KBM-7 (cell line): ENCODE measurements at regions of chr11 and their contacts with region 1.

Region 1: GRCh38 chr11:107590460-107591377 is at the start of gene ELMOD1:
- DNase-seq: peak; percentile 41

Region 2: DNA sequence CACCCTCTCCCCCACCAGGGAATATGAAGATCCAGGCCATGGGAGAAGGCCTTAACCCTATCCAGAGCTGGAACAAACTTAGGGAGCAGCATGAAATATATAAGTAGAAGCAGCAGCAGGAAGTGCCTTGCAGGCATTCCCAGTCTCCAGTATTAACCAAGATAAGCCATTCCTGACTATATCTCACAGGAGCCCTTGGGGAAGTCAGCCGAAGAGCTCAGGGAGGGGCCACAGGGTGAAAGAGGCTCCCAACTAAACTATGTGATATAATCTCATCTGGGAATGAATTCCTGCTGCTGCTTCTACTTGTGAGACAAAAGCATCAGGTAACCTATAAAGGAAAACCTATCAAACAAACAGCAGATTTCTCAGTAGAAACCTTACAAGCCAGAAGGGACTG is 536.3 kb before region 1 on chr11:
- in situ Hi-C with region 1: no loop called
- DNase-seq: no peak

Region 3: DNA sequence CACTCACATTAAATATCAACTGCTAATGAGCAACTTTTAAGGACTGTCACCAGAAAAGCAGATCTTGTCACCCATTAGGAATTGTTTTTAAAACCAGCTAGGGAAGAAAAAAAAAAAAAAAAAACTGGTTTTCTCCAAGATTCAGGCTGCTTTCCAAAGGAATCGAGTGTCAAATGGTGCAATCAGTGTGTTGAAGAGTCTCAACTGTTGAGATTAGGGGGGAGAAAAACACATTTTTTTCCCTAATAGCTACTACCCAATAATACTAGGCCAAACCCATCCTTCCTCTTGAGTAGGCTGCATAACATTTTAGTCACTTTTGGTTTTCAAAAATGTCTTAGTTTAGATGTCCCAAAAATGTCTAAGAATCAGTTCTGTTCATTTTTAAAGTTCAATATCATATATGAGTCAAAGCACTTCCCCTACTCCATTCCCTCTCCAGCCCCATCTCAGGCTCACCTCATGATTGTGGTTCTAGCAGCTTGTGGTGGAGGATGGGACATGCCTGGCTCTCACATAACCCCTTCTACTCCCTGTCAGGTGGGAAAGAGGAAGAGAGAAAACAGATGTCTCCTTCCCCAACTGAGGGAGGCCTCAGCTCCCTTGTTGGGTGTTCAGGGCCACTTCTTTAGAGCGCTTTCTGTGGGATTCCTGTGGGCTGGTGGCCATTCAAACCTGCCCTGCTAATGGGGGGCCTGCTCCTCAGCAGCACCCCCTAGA is 326.7 kb before region 1 on chr11:
- in situ Hi-C with region 1: no loop called
- DNase-seq: peak; percentile 25

Region 4: DNA sequence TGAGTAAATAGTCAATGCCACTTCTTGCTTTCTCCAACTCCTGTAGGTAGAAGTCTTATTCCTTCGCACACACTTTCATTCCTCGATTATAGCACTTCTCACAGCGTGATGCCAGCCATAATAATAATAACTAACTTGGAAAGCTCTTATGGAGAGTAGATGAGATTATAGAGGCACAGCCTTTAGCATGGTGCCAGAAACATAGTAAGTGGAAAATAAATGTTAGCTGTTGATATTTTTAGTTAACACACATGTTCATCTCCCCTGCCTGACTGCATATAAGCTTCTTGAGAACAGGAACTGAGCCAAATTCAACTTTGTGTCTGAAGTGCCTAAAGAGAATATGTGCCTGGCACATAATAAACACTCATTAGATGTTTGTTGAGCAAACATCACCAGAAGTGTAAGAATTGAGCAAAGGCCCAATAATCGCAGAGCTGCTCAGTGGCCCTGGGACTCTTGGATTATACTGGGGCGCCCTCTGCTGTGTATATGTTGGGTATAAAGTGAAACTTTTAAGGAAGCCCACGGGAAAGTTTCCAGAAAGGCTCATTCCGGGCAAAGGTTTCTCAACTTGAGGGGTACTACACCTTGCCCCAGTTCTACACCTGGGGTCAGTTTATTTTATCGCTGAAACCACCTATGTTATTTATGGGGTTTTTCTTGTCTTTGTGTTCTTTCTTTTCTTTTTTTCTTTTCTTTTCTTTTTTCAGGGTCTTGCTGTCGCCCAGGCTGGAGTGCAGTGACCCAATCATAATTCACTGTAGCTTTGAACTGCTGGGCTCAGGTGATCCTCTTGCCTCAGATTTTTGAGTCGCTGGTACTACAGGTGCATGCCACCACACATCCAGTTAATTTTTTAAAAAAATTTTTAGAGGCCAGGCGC is 98.8 kb after region 1 on chr11:
- in situ Hi-C with region 1: loop called (anchors 25 kb)
- DNase-seq: peak; percentile 68

Region 5: GRCh38 chr11:107731941-107732688 is 141.4 kb after region 1 on chr11:
- in situ Hi-C with region 1: no loop called
- DNase-seq: no peak